Mammary epithelial cell (primary cell): ENCODE measurements at regions of chr20 and their contacts with region 1.

Region 1: DNA sequence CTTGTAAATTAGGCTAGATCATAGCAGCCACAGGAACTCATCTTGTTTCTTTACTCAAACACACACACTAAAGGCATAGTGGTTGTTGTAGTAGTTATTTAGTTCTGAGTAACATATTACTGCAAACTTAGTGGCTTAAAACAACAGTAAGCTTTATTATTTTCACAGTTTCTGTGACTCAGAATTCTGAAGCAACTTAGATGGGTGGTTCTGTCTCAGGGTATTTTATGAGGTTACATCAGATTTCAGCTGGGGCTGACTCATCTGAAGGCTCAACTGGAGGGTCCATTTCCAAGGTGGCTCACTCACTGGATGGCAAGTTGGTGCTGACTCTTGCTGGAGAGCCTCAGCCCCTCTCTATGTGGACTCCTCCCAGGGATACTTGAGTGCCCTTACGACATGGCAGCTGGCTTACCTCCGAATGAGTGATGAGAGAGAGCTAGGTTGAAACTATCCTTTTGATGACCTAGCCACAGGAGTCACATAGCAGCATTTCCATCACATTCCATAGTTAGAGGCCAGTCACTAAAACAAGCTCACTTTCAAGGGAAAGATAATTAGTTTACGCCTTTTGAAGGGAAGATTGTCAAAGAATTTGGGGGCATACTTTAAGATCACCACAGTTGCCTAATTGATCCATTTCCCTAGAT is 136.5 kb upstream of the PRND start:
- DNase-seq: peak; percentile 68
- H3K4me3 ChIP-seq: no peak overlapping the region
- H3K27ac ChIP-seq: peak overlapping the region; percentile 80
- H3K4me1 ChIP-seq: peaks cover 14% of the 10 kb centered on the region
- H3K27me3 ChIP-seq: no peaks in the 10 kb centered on the region
- CTCF ChIP-seq: no peak

Region 2: DNA sequence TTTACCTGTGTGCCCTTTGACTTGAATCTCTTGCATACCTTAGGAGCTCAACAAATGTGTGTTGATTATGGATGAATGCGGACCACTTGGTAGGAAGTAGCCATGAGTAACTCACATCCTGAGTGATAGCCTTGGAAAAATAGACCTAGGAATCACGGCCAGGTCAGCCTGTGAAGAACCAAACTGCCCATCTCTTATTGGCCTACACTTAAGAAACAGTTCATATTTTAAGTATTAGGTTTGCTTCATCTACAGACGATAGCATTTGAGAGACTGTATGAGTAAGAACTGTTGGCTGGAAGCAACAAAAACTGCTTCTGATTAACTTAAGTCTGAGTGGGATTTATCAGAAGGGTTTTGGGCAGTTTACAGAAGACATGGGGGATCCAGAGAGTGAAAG is 183.6 kb before region 1 on chr20:
- CTCF ChIA-PET with region 1: no interaction called
- dilution Hi-C with region 1: loop called (anchors 5 kb)
- in situ Hi-C with region 1: no loop called
- intact Hi-C with region 1: no loop called
- DNase-seq: no peak
- H3K4me3 ChIP-seq: no peak overlapping the region
- H3K27ac ChIP-seq: no peak overlapping the region
- H3K4me1 ChIP-seq: peaks cover 8% of the 10 kb centered on the region
- H3K27me3 ChIP-seq: no peaks in the 10 kb centered on the region
- CTCF ChIP-seq: no peak

Region 3: DNA sequence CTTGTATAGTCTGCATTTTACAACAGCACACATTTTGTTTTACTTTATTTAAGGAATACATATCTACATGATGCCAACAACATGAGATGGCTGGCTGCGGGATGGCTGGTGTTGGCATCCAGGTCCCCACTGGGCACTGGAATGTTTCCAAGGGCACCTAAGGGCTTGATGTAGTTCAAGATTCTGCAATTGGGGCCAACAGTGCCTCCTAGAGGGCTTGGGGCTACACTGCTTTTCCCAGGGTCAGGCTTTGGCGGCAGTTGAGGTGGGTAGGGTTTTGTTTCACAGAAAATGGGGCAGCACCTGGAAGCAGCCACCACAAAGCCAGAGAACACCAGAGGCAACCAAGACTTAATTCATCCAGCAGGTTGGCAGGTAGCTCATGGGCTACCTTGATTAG is 65.7 kb before region 1 on chr20:
- CTCF ChIA-PET with region 1: no interaction called
- dilution Hi-C with region 1: loop called (anchors 10 kb)
- in situ Hi-C with region 1: no loop called
- intact Hi-C with region 1: loop called (anchors 5 kb)
- DNase-seq: peak; percentile 11
- H3K4me3 ChIP-seq: no peak overlapping the region
- H3K27ac ChIP-seq: no peak overlapping the region
- H3K4me1 ChIP-seq: peaks cover 4% of the 10 kb centered on the region
- H3K27me3 ChIP-seq: no peaks in the 10 kb centered on the region
- CTCF ChIP-seq: peak; percentile 66 to 68

Region 4: DNA sequence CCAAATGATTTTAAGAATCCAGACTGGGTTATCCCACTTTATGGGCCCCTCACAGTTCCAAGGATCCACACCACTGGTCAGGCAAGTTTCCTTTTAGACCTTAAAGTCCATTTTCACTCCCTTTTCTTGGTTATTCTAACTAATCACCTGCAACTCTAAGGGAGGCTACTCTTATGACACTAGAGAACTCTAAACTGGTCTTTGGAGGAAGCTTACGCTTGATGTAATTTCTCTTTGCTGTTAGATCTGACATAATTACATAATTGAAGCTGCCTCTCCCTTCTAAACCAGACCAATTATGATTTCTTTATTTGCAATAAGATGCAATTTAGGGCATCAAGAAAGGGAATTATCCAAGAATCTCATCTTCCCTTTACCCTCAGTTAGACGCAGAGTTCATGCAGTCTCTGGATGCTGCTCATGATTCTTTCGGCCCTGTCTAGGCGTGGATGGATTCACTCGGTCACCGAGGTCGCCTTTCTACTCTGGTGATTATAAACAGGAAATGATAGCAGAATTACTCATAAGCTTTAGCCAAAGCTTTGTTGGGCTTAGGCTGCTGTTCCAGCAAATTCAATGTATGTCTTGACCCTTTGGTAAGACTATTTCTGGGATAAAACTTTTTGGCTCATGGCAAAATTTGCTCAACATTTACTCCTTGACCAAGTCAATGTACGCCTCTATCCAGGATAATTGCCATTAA is 29.9 kb before region 1 on chr20:
- CTCF ChIA-PET with region 1: no interaction called
- dilution Hi-C with region 1: no loop called
- in situ Hi-C with region 1: no loop called
- intact Hi-C with region 1: no loop called
- DNase-seq: peak; percentile 66
- H3K4me3 ChIP-seq: no peak overlapping the region
- H3K27ac ChIP-seq: peak overlapping the region; percentile 43
- H3K4me1 ChIP-seq: peaks cover 33% of the 10 kb centered on the region
- H3K27me3 ChIP-seq: no peaks in the 10 kb centered on the region
- CTCF ChIP-seq: no peak